ENCODE measurements at regions of chr12 and their contacts with region 1.

Region 1: GRCh38 chr12:51326762-51327439 is 2.9 kb upstream of the BIN2 start:
- DNase-seq: no peak
- ATAC-seq: peak; percentile 18
- H3K4me3 Mint-ChIP-seq: peak overlapping the region; percentile 49
- H3K27ac Mint-ChIP-seq: peak overlapping the region; percentile 88
- H3K4me1 Mint-ChIP-seq: peaks cover 68% of the 10 kb centered on the region
- H3K27me3 Mint-ChIP-seq: no peaks in the 10 kb centered on the region

Region 2: GRCh38 chr12:51083126-51083833 is 243.6 kb before region 1 on chr12 and contains the start of gene CSRNP2:
- CTCF ChIA-PET with region 1: interaction called, 3 read pairs
- POLR2A ChIA-PET with region 1: no interaction called
- intact Hi-C with region 1: loop called in 1 of 2 experiments (anchors 2 kb)
- DNase-seq: peak; percentile 97
- ATAC-seq: peak; percentile 99
- H3K4me3 Mint-ChIP-seq: peak within 1 kb of the TSS; percentile 95
- H3K27ac Mint-ChIP-seq: peak within 1 kb of the TSS; percentile 86
- H3K4me1 Mint-ChIP-seq: peaks cover 46% of the 10 kb centered on the region
- H3K27me3 Mint-ChIP-seq: no peaks in the 10 kb centered on the region
- total RNA-seq, gene CSRNP2: 12.8 to 13.6 TPM

Region 3: GRCh38 chr12:51238510-51239334 is 88.2 kb before region 1 on chr12 and contains the start of gene DAZAP2:
- CTCF ChIA-PET with region 1: interaction called, 3 read pairs
- POLR2A ChIA-PET with region 1: no interaction called
- intact Hi-C with region 1: loop called in 1 of 2 experiments (anchors 2 kb)
- DNase-seq: peak; percentile 98
- ATAC-seq: peak; percentile 92
- H3K4me3 Mint-ChIP-seq: peak within 1 kb of the TSS; percentile 87
- H3K27ac Mint-ChIP-seq: peak within 1 kb of the TSS; percentile 100
- H3K4me1 Mint-ChIP-seq: peaks cover 36% of the 10 kb centered on the region
- H3K27me3 Mint-ChIP-seq: no peaks in the 10 kb centered on the region
- total RNA-seq, gene DAZAP2: 94.8 to 95.2 TPM

Region 4: GRCh38 chr12:51270067-51270970 is 56.6 kb before region 1 on chr12 and contains the start of gene SMAGP:
- CTCF ChIA-PET with region 1: interaction called, 6 read pairs
- POLR2A ChIA-PET with region 1: no interaction called
- intact Hi-C with region 1: loop called in 1 of 2 experiments (anchors 5 kb)
- DNase-seq: peak; percentile 57
- ATAC-seq: peak; percentile 41
- H3K4me3 Mint-ChIP-seq: peak within 1 kb of the TSS; percentile 78
- H3K27ac Mint-ChIP-seq: no peak within 1 kb of the TSS
- H3K4me1 Mint-ChIP-seq: peaks cover 18% of the 10 kb centered on the region
- H3K27me3 Mint-ChIP-seq: peaks cover 14% of the 10 kb centered on the region
- total RNA-seq, gene SMAGP: 0.69 to 0.86 TPM

Region 5: DNA sequence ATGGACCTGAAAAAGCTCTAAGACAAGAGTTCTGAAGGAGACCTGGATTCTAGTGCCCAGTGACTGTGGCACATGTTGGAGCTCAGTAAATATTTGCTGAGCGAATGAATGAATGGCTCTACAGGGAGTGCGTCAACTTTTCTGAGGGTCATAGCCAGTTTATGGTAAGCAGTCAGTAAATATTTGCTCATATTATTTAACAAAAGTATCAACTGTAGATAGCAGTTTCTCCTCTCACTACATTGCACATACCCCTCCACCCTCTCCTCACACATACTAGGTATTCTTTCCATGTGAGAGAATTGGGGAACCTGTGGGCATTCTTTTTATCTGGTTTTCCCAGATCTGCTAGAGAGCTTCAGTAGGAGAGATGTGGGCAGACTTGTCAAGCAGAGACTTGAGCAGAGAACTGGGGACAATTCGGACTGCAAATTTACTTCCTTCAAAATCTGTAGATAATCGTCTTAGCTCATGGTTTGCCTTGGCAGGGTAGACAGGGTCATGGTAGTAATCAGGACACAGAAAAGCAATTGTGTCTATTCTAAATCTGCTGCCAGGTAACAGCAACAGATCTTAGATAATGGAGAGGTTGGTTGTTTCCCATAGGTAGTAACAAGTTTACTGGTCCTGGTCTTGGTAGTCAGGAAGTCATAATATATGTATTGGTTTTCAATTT is 103.5 kb after region 1 on chr12:
- CTCF ChIA-PET with region 1: no interaction called
- POLR2A ChIA-PET with region 1: no interaction called
- intact Hi-C with region 1: no loop called
- DNase-seq: no peak
- ATAC-seq: no peak
- H3K4me3 Mint-ChIP-seq: no peak overlapping the region
- H3K27ac Mint-ChIP-seq: no peak overlapping the region
- H3K4me1 Mint-ChIP-seq: peaks cover 2% of the 10 kb centered on the region
- H3K27me3 Mint-ChIP-seq: no peaks in the 10 kb centered on the region